ENCODE measurements at regions of chr5 and their contacts with region 1.

Region 1: DNA sequence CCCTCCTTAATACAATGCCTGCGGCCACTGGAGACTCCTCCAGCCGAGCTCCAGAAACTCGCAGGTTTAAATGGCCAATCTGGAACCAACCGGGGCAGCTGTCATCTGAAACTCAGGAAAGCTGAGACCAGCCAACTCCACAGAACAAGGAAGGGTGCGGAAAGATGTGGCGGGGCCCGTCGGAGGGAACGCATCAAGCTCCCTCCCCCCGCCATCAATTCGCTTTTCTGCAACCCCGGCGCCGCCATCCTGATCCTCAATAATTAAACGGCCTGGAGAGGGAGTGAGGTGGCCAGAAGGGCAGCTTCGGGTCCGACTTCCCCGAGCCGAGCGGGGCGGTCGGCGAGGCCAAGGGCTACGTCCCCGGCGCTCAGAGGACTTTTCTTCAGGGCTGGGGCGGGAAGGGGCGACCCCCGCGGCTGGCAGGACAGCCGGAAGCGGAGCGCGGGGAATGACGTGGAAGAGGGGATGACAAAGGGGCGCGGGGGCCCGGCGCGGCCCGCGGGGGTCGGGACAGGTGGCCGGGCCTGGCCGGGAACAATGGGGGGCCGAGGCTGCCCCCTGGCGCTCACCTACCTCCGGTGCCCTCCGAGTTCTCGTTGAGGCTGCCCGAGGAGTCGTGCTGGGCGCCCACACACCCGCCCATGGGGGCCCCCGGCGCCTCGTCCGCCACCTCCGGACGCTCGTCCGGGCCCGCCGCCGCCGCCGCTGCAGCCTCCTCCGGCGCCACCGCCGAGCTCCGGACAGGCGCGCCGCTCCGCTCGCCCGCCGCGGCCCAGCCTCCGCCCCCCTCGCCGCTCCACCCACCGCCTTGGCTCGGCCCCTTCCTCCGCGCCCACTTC is at the start of gene UBTD2:
- DNase-seq: peak; percentile 79
- H3K4me3 Mint-ChIP-seq: peak within 1 kb of the TSS; percentile 89
- H3K27ac Mint-ChIP-seq: peak within 1 kb of the TSS; percentile 75
- H3K4me1 Mint-ChIP-seq: peaks cover 24% of the 10 kb centered on the region
- H3K27me3 Mint-ChIP-seq: peaks cover 25% of the 10 kb centered on the region
- total RNA-seq, gene UBTD2: 6.6 TPM in 2 replicates

Region 2: DNA sequence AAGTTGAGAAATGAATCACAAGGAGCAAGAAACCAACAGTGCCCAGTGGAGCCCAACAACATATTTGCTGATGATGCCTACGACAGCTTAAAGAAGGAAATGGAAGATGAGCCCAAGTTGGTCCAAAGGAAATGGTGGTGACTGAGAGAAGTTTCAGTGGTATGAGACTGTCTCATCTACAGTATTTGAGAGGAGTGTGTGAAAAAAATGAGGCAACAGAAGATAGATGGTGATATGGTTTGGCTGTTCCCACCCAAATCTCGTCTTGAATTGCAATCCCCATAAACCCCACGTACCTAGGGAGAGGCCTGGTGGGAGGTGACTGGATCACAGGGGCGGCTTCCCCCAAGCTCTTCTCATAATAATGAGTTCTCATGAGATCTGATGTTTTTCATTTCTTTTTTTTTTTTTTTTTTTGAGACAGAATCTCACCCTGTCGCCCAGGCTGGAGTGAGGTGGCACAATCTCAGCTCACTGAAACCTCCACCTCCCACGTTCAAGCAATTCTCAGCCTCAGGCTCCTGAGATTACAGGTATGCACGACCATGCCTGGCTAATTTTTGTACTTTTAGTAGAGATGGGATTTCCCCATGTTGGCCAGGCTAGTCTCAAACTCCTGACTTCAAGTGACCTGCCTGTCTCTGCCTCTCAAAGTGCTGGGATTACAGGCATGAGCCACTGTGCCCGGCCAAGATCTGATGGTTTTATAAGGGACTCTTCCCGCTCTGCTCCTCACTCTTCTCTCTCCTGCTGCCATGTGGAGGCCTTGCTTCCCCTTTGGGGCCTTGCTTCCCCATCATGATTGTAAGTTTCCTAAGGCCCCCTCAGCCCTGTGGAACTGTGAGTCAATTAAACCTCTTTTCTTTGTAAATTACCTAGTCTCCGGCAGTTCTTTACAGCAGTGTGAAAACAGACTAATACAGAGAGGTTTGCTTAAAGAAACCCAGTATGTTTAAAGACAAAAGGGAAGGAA is 59.1 kb before region 1 on chr5:
- intact Hi-C with region 1: loop called (anchors 1 kb)
- DNase-seq: peak; percentile 11
- H3K4me3 Mint-ChIP-seq: no peak overlapping the region
- H3K27ac Mint-ChIP-seq: peak overlapping the region; percentile 71
- H3K4me1 Mint-ChIP-seq: peaks cover 31% of the 10 kb centered on the region
- H3K27me3 Mint-ChIP-seq: peaks cover 24% of the 10 kb centered on the region

Region 3: DNA sequence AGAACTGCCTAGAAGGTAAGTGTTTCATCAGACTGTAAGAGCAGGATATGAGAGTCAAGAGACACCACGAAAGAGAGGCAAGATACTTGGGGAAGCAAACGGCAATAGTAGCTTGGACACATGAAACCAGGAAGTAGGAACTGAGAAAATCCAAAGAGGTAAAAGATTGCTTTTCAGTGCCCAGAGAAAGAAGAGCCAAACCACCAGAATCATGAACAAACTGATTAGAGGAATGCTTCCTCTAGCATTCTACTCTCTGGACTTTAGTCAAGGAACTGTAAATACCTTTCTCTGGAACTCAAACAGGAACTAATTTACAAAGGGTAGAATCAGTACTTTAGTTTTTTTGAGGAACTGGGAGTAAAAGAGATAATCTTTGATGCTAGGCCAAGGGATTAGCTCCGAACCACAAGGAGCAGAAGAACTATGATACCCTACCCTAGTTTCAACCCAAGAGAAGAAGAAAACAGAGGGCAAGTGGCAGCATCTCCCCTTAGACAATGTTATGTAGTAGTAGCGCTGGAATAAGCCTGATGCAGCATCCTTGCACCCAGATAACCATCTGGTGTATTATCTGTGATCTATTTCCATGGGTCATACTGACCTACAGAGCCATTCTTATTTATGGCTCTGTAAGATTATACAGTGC is 48.0 kb before region 1 on chr5:
- intact Hi-C with region 1: loop called (anchors 2 kb)
- DNase-seq: no peak
- H3K4me3 Mint-ChIP-seq: no peak overlapping the region
- H3K27ac Mint-ChIP-seq: no peak overlapping the region
- H3K4me1 Mint-ChIP-seq: peaks cover 43% of the 10 kb centered on the region
- H3K27me3 Mint-ChIP-seq: peaks cover 6% of the 10 kb centered on the region

Region 4: GRCh38 chr5:172564188-172564587 is 280.9 kb after region 1 on chr5:
- intact Hi-C with region 1: no loop called
- DNase-seq: no peak
- H3K4me3 Mint-ChIP-seq: no peak overlapping the region
- H3K27ac Mint-ChIP-seq: no peak overlapping the region
- H3K4me1 Mint-ChIP-seq: no peaks in the 10 kb centered on the region
- H3K27me3 Mint-ChIP-seq: no peaks in the 10 kb centered on the region

Measured in activated T-helper 2 cell treated with anti-CD3 and anti-CD28 coated beads, Interferon-gamma antibody, Interleukin-2, Interleukin-4, amounts not matched to agents 10 μg/mL and 5 μg/mL and 100 μg/mL, durations not matched to agents 14 hours and 24 hours and 36 hours (primary cell).